ENCODE measurements at regions of chr13 and their contacts with region 1.

Region 1: GRCh38 chr13:42996584-42996983 is 4.5 kb upstream of the EPSTI1 start:
- DNase-seq: peak; percentile 94
- H3K4me3 ChIP-seq: no peak overlapping the region
- H3K27ac ChIP-seq: peak overlapping the region; percentile 81
- H3K4me1 ChIP-seq: peaks cover 37% of the 10 kb centered on the region
- H3K27me3 ChIP-seq: no peaks in the 10 kb centered on the region
- CTCF ChIP-seq: no peak

Region 2: DNA sequence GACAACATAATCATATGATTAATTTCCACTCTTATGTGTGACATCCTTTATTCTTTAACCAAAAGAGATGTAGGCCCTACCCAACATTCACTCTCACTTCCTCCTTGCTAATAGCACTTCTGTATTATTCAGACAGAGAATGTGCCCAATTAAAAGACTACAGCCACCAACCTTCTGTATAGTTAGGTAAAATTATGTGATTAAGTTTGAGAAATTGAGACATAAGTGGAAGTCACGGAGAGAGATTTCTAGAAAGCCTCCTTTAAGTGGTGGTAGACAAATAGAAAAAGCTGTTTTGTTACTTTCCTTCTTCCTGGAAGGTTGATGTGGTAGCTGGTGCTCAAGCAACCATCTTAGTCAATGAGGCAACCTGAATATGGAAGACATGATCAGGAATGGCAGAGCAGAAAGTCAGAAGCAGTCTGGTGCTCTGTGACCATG is 19.3 kb before region 1 on chr13:
- CTCF ChIA-PET with region 1: no interaction called
- dilution Hi-C with region 1: no loop called
- in situ Hi-C with region 1: no loop called
- intact Hi-C with region 1: no loop called
- DNase-seq: no peak
- H3K4me3 ChIP-seq: no peak overlapping the region
- H3K27ac ChIP-seq: no peak overlapping the region
- H3K4me1 ChIP-seq: peaks cover 5% of the 10 kb centered on the region
- H3K27me3 ChIP-seq: no peaks in the 10 kb centered on the region
- CTCF ChIP-seq: no peak

Region 3: DNA sequence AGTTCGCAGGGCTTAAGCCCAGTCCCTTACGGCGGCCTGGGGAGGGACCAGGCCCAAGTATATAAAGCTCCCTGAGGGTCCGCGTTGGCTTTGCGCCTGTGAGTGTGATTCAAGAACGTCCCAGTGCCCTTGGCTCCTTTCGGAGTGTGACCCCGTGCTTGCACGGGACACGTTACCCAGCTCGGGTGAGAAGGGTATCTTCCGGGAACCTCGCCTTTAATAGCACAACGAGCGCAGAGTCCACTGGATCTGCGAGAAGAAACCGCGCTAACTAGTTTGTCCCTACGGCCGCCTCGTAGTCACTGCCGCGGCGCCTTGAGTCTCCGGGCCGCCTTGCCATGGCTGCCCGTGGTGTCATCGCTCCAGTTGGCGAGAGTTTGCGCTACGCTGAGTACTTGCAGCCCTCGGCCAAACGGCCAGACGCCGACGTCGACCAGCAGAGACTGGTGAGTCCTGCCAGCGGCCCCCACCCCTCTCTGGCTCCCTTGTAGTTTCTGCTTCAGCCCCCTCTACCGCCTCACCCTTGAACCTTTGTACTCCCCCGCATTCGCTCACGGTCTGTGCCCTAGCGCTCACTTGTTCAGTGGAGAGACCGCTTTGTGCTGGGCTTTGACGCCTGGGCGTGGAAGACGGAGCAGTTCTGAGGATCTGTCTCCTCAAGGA is 26.8 kb after region 1 on chr13 and contains the start of gene DNAJC15:
- CTCF ChIA-PET with region 1: no interaction called
- dilution Hi-C with region 1: no loop called
- in situ Hi-C with region 1: no loop called
- intact Hi-C with region 1: loop called (anchors 2 kb)
- DNase-seq: no peak
- H3K4me3 ChIP-seq: peak within 1 kb of the TSS; percentile 60 to 78 (median 64)
- H3K27ac ChIP-seq: peak within 1 kb of the TSS; percentile 80
- H3K4me1 ChIP-seq: peaks cover 5% of the 10 kb centered on the region
- H3K27me3 ChIP-seq: no peaks in the 10 kb centered on the region
- CTCF ChIP-seq: peak in 1 of 2 donors; percentile 28
- total RNA-seq, gene DNAJC15: 9.3 to 20.7 TPM

Region 4: DNA sequence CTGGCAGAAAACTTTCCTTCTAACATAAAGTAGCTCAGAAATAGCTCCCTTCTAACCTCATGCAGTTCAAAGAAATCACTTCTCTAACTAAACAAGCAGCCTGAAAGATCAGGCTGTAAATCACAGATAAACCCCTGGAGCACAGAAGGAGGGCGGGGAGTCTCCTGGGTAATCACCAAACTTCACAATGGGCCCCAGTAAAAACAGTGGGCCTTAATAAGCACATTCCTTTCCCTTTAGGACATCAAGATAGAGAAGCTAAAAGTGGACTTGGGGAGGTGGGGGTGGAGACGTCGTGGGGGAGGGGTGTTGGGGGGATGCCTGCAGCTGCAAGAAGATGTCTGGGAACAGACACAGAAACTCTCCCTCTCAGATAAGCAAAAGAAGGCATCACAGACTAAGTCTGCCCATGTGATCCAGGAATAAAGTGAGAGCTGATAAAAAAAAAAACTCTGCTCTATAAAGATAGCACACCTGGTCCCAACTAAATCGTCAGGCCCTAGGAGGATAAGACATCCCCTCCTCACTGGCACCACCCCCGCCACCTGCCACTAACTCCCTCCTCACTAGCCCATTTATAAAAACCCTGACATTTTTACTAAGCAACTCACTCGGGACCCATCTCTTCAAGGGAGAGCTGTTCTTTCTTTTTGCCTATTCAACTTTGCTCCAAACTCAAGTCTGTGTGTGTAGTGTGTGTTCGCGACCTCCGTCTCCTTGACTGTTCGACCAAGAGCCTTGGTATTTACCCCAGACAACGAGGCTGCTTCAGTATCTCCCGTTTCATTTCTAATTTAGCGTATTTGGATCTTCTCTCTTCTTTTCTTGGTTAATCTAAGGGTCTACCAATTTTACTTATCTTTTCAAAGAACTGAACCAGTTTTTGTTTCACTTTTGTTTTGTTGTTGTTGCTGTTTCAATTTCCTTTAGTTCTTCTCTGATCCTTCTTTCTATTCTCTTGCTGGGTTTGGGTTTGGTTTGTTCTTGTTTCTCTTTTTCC is 58.5 kb after region 1 on chr13:
- CTCF ChIA-PET with region 1: no interaction called
- dilution Hi-C with region 1: loop called (anchors 5 kb)
- in situ Hi-C with region 1: no loop called
- intact Hi-C with region 1: loop called (anchors 2 kb)
- DNase-seq: peak; percentile 32
- H3K4me3 ChIP-seq: peak overlapping the region in 1 of 3 experiments; percentile 6
- H3K27ac ChIP-seq: peak overlapping the region; percentile 62
- H3K4me1 ChIP-seq: peaks cover 44% of the 10 kb centered on the region
- H3K27me3 ChIP-seq: no peaks in the 10 kb centered on the region
- CTCF ChIP-seq: no peak